ENCODE measurements at regions of chr19 and their contacts with region 1.

Region 1: DNA sequence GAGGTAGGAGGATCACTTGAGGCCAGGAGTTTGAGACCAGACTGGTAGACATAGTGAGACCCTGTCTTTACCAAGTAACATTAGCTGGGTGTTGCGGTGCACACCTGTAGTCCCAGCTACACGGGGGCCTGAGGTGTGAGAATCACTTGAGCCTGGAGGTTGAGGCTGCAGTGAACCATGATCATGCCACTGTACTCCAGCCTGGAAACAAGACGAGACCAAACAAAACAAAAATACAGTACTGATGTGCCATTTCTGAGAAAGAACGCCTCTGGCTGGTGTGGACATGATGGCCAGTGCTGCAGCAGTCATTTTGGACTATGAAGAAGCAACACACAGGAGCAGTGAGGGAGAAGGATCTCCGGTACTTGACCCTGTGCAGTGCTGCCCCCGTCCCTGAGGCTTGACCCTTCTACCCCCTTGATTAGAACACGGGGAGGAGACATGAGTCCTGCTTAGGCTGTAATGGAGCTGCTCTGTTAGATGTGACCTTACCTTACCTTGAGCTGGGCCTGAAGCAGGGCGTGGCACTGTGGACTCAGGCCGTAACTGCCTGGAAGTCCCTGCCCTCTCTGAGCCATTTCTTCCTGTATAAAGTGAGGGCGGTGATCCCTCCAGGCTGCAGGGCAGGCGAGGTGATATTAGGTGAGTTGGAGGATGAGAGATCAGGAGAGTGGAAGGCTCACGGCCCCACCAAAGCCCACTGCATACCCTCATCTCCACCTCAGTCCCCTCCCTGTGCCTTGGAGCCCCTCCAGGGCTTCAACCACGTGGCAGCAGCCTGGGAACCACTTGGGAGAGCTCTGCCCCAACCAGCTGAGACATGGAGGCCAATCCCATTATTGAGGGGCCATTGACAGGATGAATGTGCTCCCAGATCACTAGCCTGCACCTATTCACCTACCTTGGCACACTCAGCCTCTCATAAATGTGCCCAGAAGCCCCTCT is 5.9 kb downstream of the RPL18A start:
- DNase-seq: no peak
- H3K4me3 ChIP-seq: no peak overlapping the region
- H3K27me3 ChIP-seq: peaks cover 7% of the 10 kb centered on the region
- CTCF ChIP-seq: no peak

Region 2: GRCh38 chr19:17415121-17415520 is 450.5 kb before region 1 on chr19:
- CTCF ChIA-PET with region 1: no interaction called
- POLR2A ChIA-PET with region 1: interaction called, 18 read pairs
- DNase-seq: no peak
- H3K4me3 ChIP-seq: no peak overlapping the region
- H3K27me3 ChIP-seq: 0 out of 2 replicates have a peak, but pooled peaks cover 1% of the 10 kb centered on the region
- CTCF ChIP-seq: no peak